CD8-positive, alpha-beta T cell (primary cell): ENCODE measurements at regions of chr5 and their contacts with region 1.

Region 1: GRCh38 chr5:50824109-50824508 is 157.7 kb downstream of the PARP8 start:
- DNase-seq: no peak
- ATAC-seq: no peak
- H3K4me3 ChIP-seq: no peak overlapping the region
- H3K4me3 Mint-ChIP-seq: no peak overlapping the region
- H3K27ac ChIP-seq: no peak overlapping the region
- H3K27ac Mint-ChIP-seq: peak overlapping the region; percentile 72
- H3K4me1 ChIP-seq: no peaks in the 10 kb centered on the region
- H3K4me1 Mint-ChIP-seq: peaks cover 12% of the 10 kb centered on the region
- H3K27me3 ChIP-seq: no peaks in the 10 kb centered on the region
- H3K27me3 Mint-ChIP-seq: no peaks in the 10 kb centered on the region
- CTCF ChIP-seq: no peak

Region 2: GRCh38 chr5:50794812-50795211 is 29.3 kb before region 1 on chr5:
- CTCF ChIA-PET with region 1: no interaction called
- POLR2A ChIA-PET with region 1: no interaction called
- intact Hi-C with region 1: loop called in 1 of 2 experiments (anchors 5 kb)
- DNase-seq: no peak
- ATAC-seq: no peak
- H3K4me3 ChIP-seq: no peak overlapping the region
- H3K4me3 Mint-ChIP-seq: no peak overlapping the region
- H3K27ac ChIP-seq: no peak overlapping the region
- H3K27ac Mint-ChIP-seq: peak overlapping the region; percentile 2
- H3K4me1 ChIP-seq: no peaks in the 10 kb centered on the region
- H3K4me1 Mint-ChIP-seq: peaks cover 13% of the 10 kb centered on the region
- H3K27me3 ChIP-seq: no peaks in the 10 kb centered on the region
- H3K27me3 Mint-ChIP-seq: no peaks in the 10 kb centered on the region
- CTCF ChIP-seq: no peak

Region 3: GRCh38 chr5:50836356-50836755 is 12.2 kb after region 1 on chr5:
- CTCF ChIA-PET with region 1: no interaction called
- POLR2A ChIA-PET with region 1: interaction called, 4 read pairs
- intact Hi-C with region 1: loop called in 1 of 2 experiments (anchors 2 kb)
- DNase-seq: no peak
- ATAC-seq: no peak
- H3K4me3 ChIP-seq: no peak overlapping the region
- H3K4me3 Mint-ChIP-seq: no peak overlapping the region
- H3K27ac ChIP-seq: no peak overlapping the region
- H3K27ac Mint-ChIP-seq: no peak overlapping the region
- H3K4me1 ChIP-seq: no peaks in the 10 kb centered on the region
- H3K4me1 Mint-ChIP-seq: no peaks in the 10 kb centered on the region
- H3K27me3 ChIP-seq: no peaks in the 10 kb centered on the region
- H3K27me3 Mint-ChIP-seq: no peaks in the 10 kb centered on the region
- CTCF ChIP-seq: no peak

Region 4: DNA sequence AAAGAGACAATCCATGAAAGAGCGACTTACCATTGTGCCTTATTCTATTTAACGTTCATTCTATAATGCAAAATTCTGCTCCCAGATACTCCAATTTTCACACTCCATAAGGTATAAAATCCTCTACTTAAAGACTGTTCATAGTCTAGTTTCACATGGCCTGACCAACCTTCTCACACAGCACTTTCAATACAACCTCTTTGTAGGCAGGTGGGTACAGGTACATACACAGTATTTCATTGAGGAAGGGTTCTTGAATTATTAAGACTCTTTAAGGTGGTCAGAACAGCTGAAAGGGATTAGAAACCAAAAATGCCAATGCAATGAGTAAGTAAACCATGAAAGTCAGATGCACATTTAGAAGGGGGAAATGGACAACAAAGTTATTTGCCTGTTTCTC is 194.3 kb after region 1 on chr5:
- CTCF ChIA-PET with region 1: no interaction called
- POLR2A ChIA-PET with region 1: no interaction called
- intact Hi-C with region 1: no loop called
- DNase-seq: no peak
- ATAC-seq: no peak
- H3K4me3 ChIP-seq: no peak overlapping the region
- H3K4me3 Mint-ChIP-seq: no peak overlapping the region
- H3K27ac ChIP-seq: no peak overlapping the region
- H3K27ac Mint-ChIP-seq: no peak overlapping the region
- H3K4me1 ChIP-seq: no peaks in the 10 kb centered on the region
- H3K4me1 Mint-ChIP-seq: no peaks in the 10 kb centered on the region
- H3K27me3 ChIP-seq: no peaks in the 10 kb centered on the region
- H3K27me3 Mint-ChIP-seq: no peaks in the 10 kb centered on the region
- CTCF ChIP-seq: no peak